Transverse colon (tissue), 4 donors: ENCODE measurements at regions of chr7 and their contacts with region 1.

Region 1: GRCh38 chr7:26471306-26472075 is 179.8 kb downstream of the SNX10 start:
- DNase-seq: no peak
- H3K4me3 ChIP-seq: no peak overlapping the region
- H3K27ac ChIP-seq: no peak overlapping the region
- H3K4me1 ChIP-seq: no peaks in the 10 kb centered on the region
- H3K27me3 ChIP-seq: no peaks in the 10 kb centered on the region
- CTCF ChIP-seq: no peak
- EP300 ChIP-seq: no peak
- POLR2A ChIP-seq: no peak

Region 2: GRCh38 chr7:24794751-24795731 is 1676.5 kb before region 1 on chr7:
- in situ Hi-C with region 1: no loop called
- intact Hi-C with region 1: loop called (anchors 5 kb)
- DNase-seq: no peak
- H3K4me3 ChIP-seq: no peak overlapping the region
- H3K27ac ChIP-seq: no peak overlapping the region
- H3K4me1 ChIP-seq: no peaks in the 10 kb centered on the region
- H3K27me3 ChIP-seq: no peaks in the 10 kb centered on the region
- CTCF ChIP-seq: no peak
- EP300 ChIP-seq: no peak
- POLR2A ChIP-seq: no peak

Region 3: GRCh38 chr7:26397796-26398426 is 73.6 kb before region 1 on chr7:
- in situ Hi-C with region 1: no loop called
- intact Hi-C with region 1: no loop called
- DNase-seq: peak; percentile 37
- H3K4me3 ChIP-seq: peak overlapping the region; percentile 45 to 83 (median 66)
- H3K27ac ChIP-seq: peak overlapping the region; percentile 76 to 86 (median 84)
- H3K4me1 ChIP-seq: peaks cover 0 to 20% (median 12%) of the 10 kb centered on the region in 4 donors
- H3K27me3 ChIP-seq: no peaks in the 10 kb centered on the region
- CTCF ChIP-seq: no peak
- EP300 ChIP-seq: no peak
- POLR2A ChIP-seq: peak; percentile 8

Region 4: DNA sequence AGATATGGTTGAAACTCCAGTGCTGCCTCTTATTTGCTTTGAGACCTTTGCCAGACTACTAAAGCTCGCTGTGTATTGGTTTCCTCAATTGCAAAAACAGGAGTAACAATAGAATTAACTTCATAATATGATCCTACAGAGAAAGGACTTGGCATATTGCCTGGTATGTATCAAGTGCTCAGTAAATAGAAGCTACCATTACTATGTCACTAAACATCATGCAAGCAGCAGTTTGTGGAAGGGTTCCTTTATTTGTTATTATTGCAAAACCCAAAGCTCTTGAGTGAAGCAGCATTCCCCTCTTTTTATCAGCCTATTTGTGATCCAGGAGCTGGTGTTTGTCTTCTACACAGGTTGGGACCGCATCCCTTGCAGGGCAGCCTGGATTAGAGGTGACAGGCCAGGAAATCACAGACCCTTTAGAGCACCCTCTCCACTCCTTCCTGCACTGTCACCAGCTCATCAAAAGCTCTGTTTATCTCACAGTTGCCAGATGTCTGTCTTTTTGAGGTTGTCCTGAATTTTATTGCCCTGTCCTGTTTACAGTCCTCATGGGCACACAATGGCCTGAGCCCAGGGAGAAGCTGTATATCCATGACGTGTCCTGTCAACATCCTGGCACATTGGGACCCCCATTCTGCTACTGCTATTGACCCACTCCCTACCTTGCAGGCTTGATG is 58.3 kb before region 1 on chr7:
- in situ Hi-C with region 1: no loop called
- intact Hi-C with region 1: no loop called
- DNase-seq: no peak
- H3K4me3 ChIP-seq: no peak overlapping the region
- H3K27ac ChIP-seq: no peak overlapping the region
- H3K4me1 ChIP-seq: peaks cover 0 to 3% (median 0%) of the 10 kb centered on the region in 4 donors
- H3K27me3 ChIP-seq: no peaks in the 10 kb centered on the region
- CTCF ChIP-seq: no peak
- EP300 ChIP-seq: no peak
- POLR2A ChIP-seq: no peak